Activated CD8-positive, alpha-beta T cell treated with anti-CD3 and anti-CD28 coated beads for 36 hours (primary cell): ENCODE measurements at regions of chr12 and their contacts with region 1.

Region 1: DNA sequence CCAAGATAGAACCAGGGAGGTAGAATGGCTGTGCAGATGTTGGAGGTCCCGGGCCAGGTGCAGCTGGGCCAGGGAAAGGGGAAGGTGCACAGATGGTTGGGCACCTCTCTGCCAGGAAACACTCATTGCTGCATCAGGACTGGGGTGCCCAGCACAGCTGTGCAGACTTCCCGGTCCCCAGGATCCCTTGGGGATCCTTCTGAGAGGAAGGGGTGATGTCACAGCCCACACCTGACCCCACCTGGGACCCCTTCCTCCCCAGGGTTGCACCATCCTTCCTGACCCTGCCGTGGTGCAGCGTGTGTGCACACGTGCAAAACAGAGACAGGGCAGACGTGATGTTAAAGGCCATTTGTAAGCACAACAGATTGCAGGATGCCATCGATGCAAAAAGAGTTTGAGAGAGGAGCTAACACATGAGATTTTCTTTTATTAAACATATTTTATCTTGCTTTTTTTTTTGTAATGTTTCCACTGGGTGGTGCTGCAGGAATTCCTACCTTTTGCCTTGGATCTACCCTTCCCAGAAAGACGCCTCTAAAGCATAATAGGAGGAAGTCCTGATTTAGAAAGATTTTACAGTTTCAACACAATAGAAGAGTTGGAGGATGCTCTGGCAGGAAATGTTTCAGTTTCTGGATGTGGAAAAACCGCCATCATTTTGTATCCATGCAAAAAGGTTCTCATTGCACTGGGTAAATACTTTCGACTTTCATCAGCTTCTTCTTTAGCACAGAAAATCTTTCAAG is 14.8 kb downstream of the ELK3 start:
- DNase-seq: no peak
- ATAC-seq: no peak
- H3K4me3 Mint-ChIP-seq: peak overlapping the region; percentile 9
- H3K27ac Mint-ChIP-seq: peak overlapping the region; percentile 43
- H3K4me1 Mint-ChIP-seq: peaks cover 90% of the 10 kb centered on the region
- H3K27me3 Mint-ChIP-seq: no peaks in the 10 kb centered on the region
- CTCF ChIP-seq: no peak

Region 2: DNA sequence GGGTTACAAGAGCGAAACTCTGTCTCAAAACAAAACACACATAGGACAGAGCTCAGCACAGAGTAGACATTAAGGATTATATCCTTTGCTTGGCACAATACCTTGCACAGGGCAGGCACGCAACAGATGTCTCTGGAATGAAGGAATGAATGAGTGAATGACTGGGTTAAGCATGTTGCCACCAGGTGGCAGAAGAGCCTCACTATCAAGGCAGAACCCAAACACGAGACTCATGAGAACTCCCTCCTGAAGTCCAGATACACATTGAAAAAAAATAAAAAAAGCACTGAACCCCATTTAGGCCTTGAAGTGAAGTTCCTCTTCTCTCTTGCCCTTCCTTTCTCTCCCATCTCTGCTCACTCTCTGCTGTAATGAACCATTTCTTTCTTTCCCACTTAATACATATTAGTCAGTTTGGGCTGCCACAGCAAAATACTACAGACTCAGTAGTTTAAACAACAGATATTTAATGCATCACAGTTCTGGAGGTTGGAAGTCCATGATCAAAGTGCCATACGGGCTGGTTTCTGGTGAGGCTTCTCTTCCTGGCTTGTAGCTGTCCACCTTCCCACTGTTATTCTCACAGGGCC is 147.0 kb before region 1 on chr12:
- CTCF ChIA-PET with region 1: interaction called, 79 read pairs
- POLR2A ChIA-PET with region 1: no interaction called
- intact Hi-C with region 1: no loop called
- DNase-seq: peak; percentile 88
- ATAC-seq: peak; percentile 91
- H3K4me3 Mint-ChIP-seq: no peak overlapping the region
- H3K27ac Mint-ChIP-seq: no peak overlapping the region
- H3K4me1 Mint-ChIP-seq: peaks cover 22% of the 10 kb centered on the region
- H3K27me3 Mint-ChIP-seq: no peaks in the 10 kb centered on the region
- CTCF ChIP-seq: peak; percentile 70

Region 3: GRCh38 chr12:96153131-96153725 is 55.7 kb before region 1 on chr12:
- CTCF ChIA-PET with region 1: no interaction called
- POLR2A ChIA-PET with region 1: no interaction called
- intact Hi-C with region 1: no loop called
- DNase-seq: no peak
- ATAC-seq: no peak
- H3K4me3 Mint-ChIP-seq: no peak overlapping the region
- H3K27ac Mint-ChIP-seq: no peak overlapping the region
- H3K4me1 Mint-ChIP-seq: no peaks in the 10 kb centered on the region
- H3K27me3 Mint-ChIP-seq: no peaks in the 10 kb centered on the region
- CTCF ChIP-seq: no peak

Region 4: GRCh38 chr12:96177013-96177412 is 32.0 kb before region 1 on chr12:
- CTCF ChIA-PET with region 1: interaction called, 11 read pairs
- POLR2A ChIA-PET with region 1: interaction called, 11 read pairs
- intact Hi-C with region 1: no loop called
- DNase-seq: peak; percentile 91
- ATAC-seq: peak; percentile 97
- H3K4me3 Mint-ChIP-seq: peak overlapping the region; percentile 7
- H3K27ac Mint-ChIP-seq: peak overlapping the region; percentile 86
- H3K4me1 Mint-ChIP-seq: peaks cover 31% of the 10 kb centered on the region
- H3K27me3 Mint-ChIP-seq: no peaks in the 10 kb centered on the region
- CTCF ChIP-seq: no peak

Region 5: DNA sequence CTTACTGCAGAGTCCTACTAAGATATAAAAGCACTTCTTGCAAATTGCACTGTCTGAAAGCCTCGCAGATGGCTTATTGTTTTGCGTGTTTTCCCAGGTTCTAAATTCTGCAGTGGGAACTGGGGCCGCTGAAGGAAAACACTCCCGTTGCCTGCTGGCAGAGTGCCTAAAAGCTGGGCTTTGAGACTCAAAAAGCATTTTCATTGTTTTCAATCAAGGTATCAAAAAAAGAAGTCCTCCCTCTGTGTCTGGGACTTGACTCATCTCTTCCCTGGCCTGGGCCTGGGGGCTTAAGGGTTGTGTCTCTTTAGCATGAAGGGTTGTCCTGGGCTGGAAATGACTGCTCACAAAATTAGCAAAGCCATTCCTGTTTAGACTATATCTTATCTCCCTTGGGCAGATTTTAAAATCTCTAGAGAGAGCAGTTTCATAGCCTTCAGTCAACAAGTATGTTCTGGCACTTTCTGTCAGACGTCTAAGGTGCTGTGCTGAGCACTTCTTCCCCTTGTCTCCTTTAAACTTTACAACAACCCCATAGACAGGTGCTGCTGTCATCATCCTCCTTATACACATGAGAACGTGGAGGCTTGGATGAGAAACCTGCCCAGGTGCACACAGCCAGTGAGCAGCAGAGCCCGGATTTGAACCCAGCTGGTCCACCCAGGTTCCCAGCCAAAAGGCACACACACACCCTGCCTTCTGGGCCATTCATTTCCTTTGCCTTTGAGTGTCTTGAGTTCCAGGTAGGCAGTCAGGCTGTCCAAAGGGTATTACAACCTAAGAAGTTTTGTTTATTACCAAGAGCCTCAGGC is 16.3 kb after region 1 on chr12:
- CTCF ChIA-PET with region 1: no interaction called
- POLR2A ChIA-PET with region 1: no interaction called
- intact Hi-C with region 1: no loop called
- DNase-seq: no peak
- ATAC-seq: no peak
- H3K4me3 Mint-ChIP-seq: no peak overlapping the region
- H3K27ac Mint-ChIP-seq: no peak overlapping the region
- H3K4me1 Mint-ChIP-seq: peaks cover 28% of the 10 kb centered on the region
- H3K27me3 Mint-ChIP-seq: no peaks in the 10 kb centered on the region
- CTCF ChIP-seq: no peak

Region 6: DNA sequence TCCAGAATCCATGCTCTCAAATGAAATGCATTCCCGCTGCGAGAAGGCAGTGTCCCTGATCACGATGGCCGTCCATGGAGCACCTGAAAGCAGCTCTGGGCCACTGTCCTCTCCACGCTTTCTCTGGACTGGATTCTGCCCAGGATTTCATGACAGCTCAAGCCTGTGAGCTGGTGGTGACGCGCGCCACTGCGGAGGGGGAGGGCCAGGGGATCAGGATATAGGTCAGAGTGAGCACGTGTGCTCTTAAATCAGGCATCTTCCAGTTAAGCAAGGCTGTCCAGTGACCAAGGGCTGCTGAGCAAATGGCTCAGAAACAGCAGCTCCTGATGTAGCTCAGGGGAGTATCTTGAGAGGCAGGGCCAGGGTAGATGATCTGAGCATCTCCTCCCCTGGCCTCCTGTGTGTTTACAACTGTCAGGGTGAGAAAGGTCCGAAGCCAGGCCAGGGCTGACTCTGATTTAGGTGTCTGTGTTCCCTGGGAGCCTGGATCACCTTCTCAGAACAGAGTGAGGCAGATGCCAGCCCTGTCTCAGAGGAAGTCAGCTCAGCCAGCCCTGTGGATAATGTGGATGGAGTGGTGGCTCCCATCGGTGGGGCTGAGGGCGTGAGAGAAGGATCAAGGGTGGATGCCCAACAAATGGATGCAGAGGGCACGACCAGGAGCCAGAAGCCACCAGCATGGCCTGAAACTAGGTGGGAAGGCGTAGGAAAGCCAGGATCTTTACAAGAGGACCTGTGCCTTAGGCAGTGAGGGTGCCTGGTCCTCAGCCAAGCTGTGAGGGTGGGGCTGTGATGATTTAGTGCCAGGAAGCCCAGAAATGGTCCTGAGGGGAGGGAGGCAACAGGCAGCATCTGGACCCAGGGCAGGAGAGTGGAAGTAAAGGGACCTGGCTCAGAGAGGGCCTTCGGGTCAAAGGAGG is 40.5 kb after region 1 on chr12:
- CTCF ChIA-PET with region 1: no interaction called
- POLR2A ChIA-PET with region 1: no interaction called
- intact Hi-C with region 1: no loop called
- DNase-seq: no peak
- ATAC-seq: no peak
- H3K4me3 Mint-ChIP-seq: no peak overlapping the region
- H3K27ac Mint-ChIP-seq: peak overlapping the region; percentile 41
- H3K4me1 Mint-ChIP-seq: peaks cover 18% of the 10 kb centered on the region
- H3K27me3 Mint-ChIP-seq: no peaks in the 10 kb centered on the region
- CTCF ChIP-seq: no peak